Common myeloid progenitor, CD34-positive (primary cell): ENCODE measurements at regions of chr16 and their contacts with region 1.

Region 1: GRCh38 chr16:81711657-81712319 is 67.3 kb upstream of the PLCG2 start:
- DNase-seq: peak in 2 of 3 donors; percentile 73 to 79
- H3K4me3 ChIP-seq: no peak overlapping the region
- H3K27ac ChIP-seq: no peak overlapping the region
- H3K4me1 ChIP-seq: peaks cover 0 to 18% (median 7%) of the 10 kb centered on the region in 4 experiments
- H3K27me3 ChIP-seq: no peaks in the 10 kb centered on the region

Region 2: GRCh38 chr16:81567987-81568748 is 143.6 kb before region 1 on chr16:
- CTCF ChIA-PET with region 1: no interaction called
- POLR2A ChIA-PET with region 1: no interaction called
- DNase-seq: no peak
- H3K4me3 ChIP-seq: no peak overlapping the region
- H3K27ac ChIP-seq: peak overlapping the region in 1 of 2 experiments; percentile 4
- H3K4me1 ChIP-seq: peaks cover 0 to 10% (median 0%) of the 10 kb centered on the region in 4 experiments
- H3K27me3 ChIP-seq: no peaks in the 10 kb centered on the region

Region 3: GRCh38 chr16:81723098-81723723 is 11.4 kb after region 1 on chr16:
- CTCF ChIA-PET with region 1: interaction called, 16 read pairs
- POLR2A ChIA-PET with region 1: no interaction called
- DNase-seq: peak; percentile 82 to 91 (median 90)
- H3K4me3 ChIP-seq: no peak overlapping the region
- H3K27ac ChIP-seq: no peak overlapping the region
- H3K4me1 ChIP-seq: peaks cover 2 to 9% (median 8%) of the 10 kb centered on the region in 4 experiments
- H3K27me3 ChIP-seq: no peaks in the 10 kb centered on the region